Caco-2 (cell line): ENCODE measurements at regions of chr5 and their contacts with region 1.

Region 1: DNA sequence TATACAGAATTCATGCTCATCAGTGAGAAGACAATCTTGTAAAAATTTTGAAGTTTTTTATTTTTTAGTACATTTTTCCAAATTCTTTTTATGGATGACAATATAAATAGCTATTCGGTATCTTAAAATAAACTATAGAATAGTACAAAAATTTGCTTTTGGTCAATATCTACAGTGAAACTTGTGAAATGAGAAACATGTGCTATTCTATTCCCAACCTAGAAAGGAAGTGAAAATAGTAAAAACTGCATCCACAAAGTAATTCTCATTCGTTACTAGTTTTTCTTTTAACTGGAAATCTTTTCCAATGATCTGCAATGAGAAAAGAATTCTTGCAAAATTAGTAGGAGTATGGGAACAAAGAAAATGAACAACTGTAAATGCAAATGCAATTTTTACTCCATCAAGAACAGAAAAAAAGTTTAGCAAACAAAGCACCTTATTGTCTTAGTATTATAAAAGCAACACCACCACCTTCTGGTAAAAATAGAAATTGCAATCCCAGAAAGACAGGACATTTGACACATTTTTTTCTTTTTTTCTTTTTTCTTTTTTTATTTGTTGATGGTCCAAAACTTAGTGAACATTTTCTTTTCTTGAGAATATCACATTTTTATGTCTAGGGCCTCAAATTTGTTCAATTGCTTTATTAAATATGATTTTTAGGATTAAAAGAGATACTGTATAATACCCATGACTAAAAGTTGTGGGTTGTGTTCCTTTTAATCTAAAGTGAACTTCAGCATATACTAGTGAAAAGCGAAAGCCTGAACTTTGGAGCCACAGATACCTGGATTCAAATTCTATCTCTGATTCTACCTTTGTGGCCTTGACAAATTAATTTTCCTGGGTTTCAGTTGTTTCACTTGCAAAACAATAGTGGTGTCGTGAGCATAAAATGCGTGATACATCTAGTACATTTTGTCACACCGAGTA is 72.3 kb downstream of the SLCO4C1 start:
- DNase-seq: peak in 1 of 2 experiments; percentile 67
- H3K4me3 ChIP-seq: no peak overlapping the region
- H3K4me3 Mint-ChIP-seq: no peak overlapping the region
- H3K27ac Mint-ChIP-seq: no peak overlapping the region
- H3K4me1 ChIP-seq: peaks cover 36% of the 10 kb centered on the region
- H3K4me1 Mint-ChIP-seq: peaks cover 8% of the 10 kb centered on the region
- H3K27me3 ChIP-seq: no peaks in the 10 kb centered on the region
- H3K27me3 Mint-ChIP-seq: no peaks in the 10 kb centered on the region
- CTCF ChIP-seq: peak; percentile 60 to 83

Region 2: GRCh38 chr5:101717721-101718120 is 506.1 kb before region 1 on chr5:
- CTCF ChIA-PET with region 1: no interaction called
- POLR2A ChIA-PET with region 1: no interaction called
- intact Hi-C with region 1: loop called (anchors 2 kb)
- DNase-seq: no peak
- H3K4me3 ChIP-seq: no peak overlapping the region
- H3K4me3 Mint-ChIP-seq: no peak overlapping the region
- H3K27ac Mint-ChIP-seq: no peak overlapping the region
- H3K4me1 ChIP-seq: peaks cover 15% of the 10 kb centered on the region
- H3K4me1 Mint-ChIP-seq: peaks cover 8% of the 10 kb centered on the region
- H3K27me3 ChIP-seq: no peaks in the 10 kb centered on the region
- H3K27me3 Mint-ChIP-seq: no peaks in the 10 kb centered on the region
- CTCF ChIP-seq: no peak

Region 3: GRCh38 chr5:101977729-101978345 is 246.0 kb before region 1 on chr5:
- CTCF ChIA-PET with region 1: no interaction called
- POLR2A ChIA-PET with region 1: no interaction called
- intact Hi-C with region 1: loop called (anchors 1 kb)
- DNase-seq: peak in 1 of 2 experiments; percentile 52
- H3K4me3 ChIP-seq: no peak overlapping the region
- H3K4me3 Mint-ChIP-seq: no peak overlapping the region
- H3K27ac Mint-ChIP-seq: no peak overlapping the region
- H3K4me1 ChIP-seq: no peaks in the 10 kb centered on the region
- H3K4me1 Mint-ChIP-seq: no peaks in the 10 kb centered on the region
- H3K27me3 ChIP-seq: no peaks in the 10 kb centered on the region
- H3K27me3 Mint-ChIP-seq: peaks cover 3% of the 10 kb centered on the region
- CTCF ChIP-seq: peak; percentile 66 to 70

Region 4: DNA sequence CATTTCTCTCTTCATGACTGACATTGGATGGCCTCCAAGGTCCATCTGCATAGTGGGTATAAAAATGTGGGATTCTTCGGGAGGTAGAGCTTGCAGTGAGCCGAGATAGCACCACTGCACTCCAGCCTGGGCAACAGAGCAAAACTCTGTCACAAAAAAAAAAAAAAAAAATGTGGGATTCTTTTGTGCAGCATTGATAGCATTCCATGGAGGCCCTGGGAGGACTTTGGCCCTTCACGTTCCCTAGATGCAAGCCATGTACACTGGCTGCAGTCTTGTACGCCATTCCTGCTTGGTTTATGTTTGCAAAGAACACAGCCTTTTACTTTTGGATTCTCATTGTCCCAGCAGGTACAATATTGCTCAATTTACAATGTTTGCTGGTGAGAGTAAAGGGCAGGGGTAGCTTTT is 85.6 kb before region 1 on chr5:
- CTCF ChIA-PET with region 1: interaction called, 4 read pairs
- POLR2A ChIA-PET with region 1: interaction called, 8 read pairs
- intact Hi-C with region 1: loop called (anchors 5 kb)
- DNase-seq: peak; percentile 85 to 93
- H3K4me3 ChIP-seq: no peak overlapping the region
- H3K4me3 Mint-ChIP-seq: peak overlapping the region; percentile 65
- H3K27ac Mint-ChIP-seq: peak overlapping the region; percentile 94
- H3K4me1 ChIP-seq: peaks cover 28% of the 10 kb centered on the region
- H3K4me1 Mint-ChIP-seq: peaks cover 14% of the 10 kb centered on the region
- H3K27me3 ChIP-seq: no peaks in the 10 kb centered on the region
- H3K27me3 Mint-ChIP-seq: no peaks in the 10 kb centered on the region
- CTCF ChIP-seq: no peak